ENCODE measurements at regions of chr2 and their contacts with region 1.

Region 1: GRCh38 chr2:112584134-112584890 is at the start of gene CHCHD5:
- DNase-seq: peak; percentile 91 to 96
- ATAC-seq: peak; percentile 92 to 97 (median 94)
- H3K4me3 ChIP-seq: peak within 1 kb of the TSS; percentile 53 to 75 (median 63)
- H3K27ac ChIP-seq: peak within 1 kb of the TSS; percentile 81 to 97 (median 93)
- H3K4me1 ChIP-seq: peaks cover 4 to 38% (median 30%) of the 10 kb centered on the region in 9 donors
- H3K27me3 ChIP-seq: no peaks in the 10 kb centered on the region
- CTCF ChIP-seq: peak in 8 of 9 donors; percentile 26 to 59 (median 39)
- total RNA-seq, gene CHCHD5: 20.8 to 30.3 (median 25.0) TPM

Region 2: GRCh38 chr2:112054847-112055729 is 529.2 kb before region 1 on chr2 and contains the start of gene TMEM87B:
- intact Hi-C with region 1: loop called in 1 of 10 experiments (anchors 5 kb)
- DNase-seq: peak; percentile 98 to 100
- ATAC-seq: peak; percentile 84 to 93 (median 87)
- H3K4me3 ChIP-seq: peak within 1 kb of the TSS; percentile 79 to 96 (median 84)
- H3K27ac ChIP-seq: peak within 1 kb of the TSS; percentile 92 to 100 (median 98)
- H3K4me1 ChIP-seq: peaks cover 0 to 44% (median 27%) of the 10 kb centered on the region in 9 donors
- H3K27me3 ChIP-seq: no peaks in the 10 kb centered on the region
- CTCF ChIP-seq: no peak
- total RNA-seq, gene TMEM87B: 4.4 to 11.1 (median 5.7) TPM

Region 3: GRCh38 chr2:112121682-112122254 is 462.5 kb before region 1 on chr2:
- intact Hi-C with region 1: loop called in 1 of 10 experiments (anchors 5 kb)
- DNase-seq: no peak
- ATAC-seq: no peak
- H3K4me3 ChIP-seq: no peak overlapping the region
- H3K27ac ChIP-seq: no peak overlapping the region
- H3K4me1 ChIP-seq: no peaks in the 10 kb centered on the region
- H3K27me3 ChIP-seq: no peaks in the 10 kb centered on the region
- CTCF ChIP-seq: peak; percentile 38 to 74 (median 66)

Region 4: GRCh38 chr2:112481050-112481527 is 103.2 kb before region 1 on chr2:
- intact Hi-C with region 1: loop called in 9 of 10 experiments (anchors 2 to 10 kb)
- DNase-seq: peak; percentile 81 to 83
- ATAC-seq: peak; percentile 85 to 97 (median 90)
- H3K4me3 ChIP-seq: peak overlapping the region; percentile 54 to 94 (median 84)
- H3K27ac ChIP-seq: peak overlapping the region; percentile 57 to 92 (median 90)
- H3K4me1 ChIP-seq: peaks cover 9 to 33% (median 24%) of the 10 kb centered on the region in 9 donors
- H3K27me3 ChIP-seq: no peaks in the 10 kb centered on the region
- CTCF ChIP-seq: peak; percentile 64 to 93 (median 83)

Measured in heart right ventricle (tissue), 16 donors.